Adrenal gland (tissue), 19 donors: ENCODE measurements at regions of chr2 and their contacts with region 1.

Region 1: GRCh38 chr2:160252278-160252887 is 52.3 kb upstream of the ITGB6 start:
- DNase-seq: no peak
- H3K4me3 ChIP-seq: no peak overlapping the region
- H3K27ac ChIP-seq: peak overlapping the region in 1 of 5 donors; percentile 41
- H3K4me1 ChIP-seq: peaks cover 0 to 10% of the 10 kb centered on the region in 2 donors
- H3K27me3 ChIP-seq: no peaks in the 10 kb centered on the region
- CTCF ChIP-seq: peak; percentile 60 to 91 (median 78)
- POLR2A ChIP-seq: no peak

Region 2: GRCh38 chr2:160994141-160995002 is 742.0 kb after region 1 on chr2:
- intact Hi-C with region 1: loop called in 1 of 2 experiments (anchors 5 kb)
- DNase-seq: peak; percentile 77 to 91 (median 87)
- H3K4me3 ChIP-seq: no peak overlapping the region
- H3K27ac ChIP-seq: peak overlapping the region in 2 of 5 donors; percentile 23 to 67
- H3K4me1 ChIP-seq: peaks cover 4 to 9% of the 10 kb centered on the region in 2 donors
- H3K27me3 ChIP-seq: no peaks in the 10 kb centered on the region
- CTCF ChIP-seq: peak; percentile 75 to 90 (median 88)
- POLR2A ChIP-seq: no peak